Activated CD4-positive, alpha-beta T cell treated with anti-CD3 and anti-CD28 coated beads for 36 hours (primary cell): ENCODE measurements at regions of chr14 and their contacts with region 1.

Region 1: DNA sequence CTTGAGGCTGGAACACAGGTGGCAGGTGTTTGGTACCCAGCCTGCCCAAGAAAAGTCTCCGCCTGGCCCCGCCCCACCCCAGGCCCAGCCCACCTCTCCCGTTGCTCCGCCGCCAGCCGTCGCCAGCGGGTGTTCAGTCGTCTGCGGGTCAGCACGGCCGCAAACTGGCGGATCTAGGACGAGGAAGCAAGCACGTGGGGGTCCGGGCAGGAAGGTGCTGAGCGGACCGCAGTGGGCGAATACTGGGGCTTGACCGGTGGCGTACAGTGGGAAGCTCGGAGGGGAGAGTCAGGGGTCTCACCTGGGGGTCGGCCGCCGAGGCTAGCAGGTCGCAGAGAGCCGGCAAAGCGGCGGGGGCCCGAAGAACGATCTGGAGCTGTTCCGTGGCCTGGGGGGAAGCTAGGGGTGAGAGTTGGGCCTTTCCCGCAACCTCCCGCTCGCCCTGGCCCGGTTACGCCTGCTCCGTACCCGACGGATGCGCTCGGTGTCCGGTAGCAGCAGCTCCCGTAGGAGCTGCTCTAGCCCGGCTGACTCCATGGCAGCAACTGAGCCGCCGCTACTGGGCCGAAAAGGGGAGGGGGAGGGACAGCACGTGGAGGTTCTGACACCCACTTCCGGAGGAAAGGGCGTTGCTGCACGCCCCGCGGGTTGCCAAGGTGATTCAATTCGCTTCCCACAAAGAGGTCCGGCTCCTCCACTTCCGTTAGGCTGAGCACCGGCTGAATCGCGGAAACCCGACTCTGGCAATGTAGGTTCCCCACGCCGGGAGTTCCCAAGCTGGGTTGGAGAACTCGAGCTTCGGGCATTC is at the start of gene IPO4:
- DNase-seq: peak; percentile 97
- ATAC-seq: peak; percentile 92
- H3K4me3 Mint-ChIP-seq: peak within 1 kb of the TSS; percentile 89
- H3K27ac Mint-ChIP-seq: peak within 1 kb of the TSS; percentile 83
- H3K4me1 Mint-ChIP-seq: peaks cover 40% of the 10 kb centered on the region
- H3K27me3 Mint-ChIP-seq: no peaks in the 10 kb centered on the region
- total RNA-seq, gene IPO4: 73.4 to 73.7 TPM

Region 2: DNA sequence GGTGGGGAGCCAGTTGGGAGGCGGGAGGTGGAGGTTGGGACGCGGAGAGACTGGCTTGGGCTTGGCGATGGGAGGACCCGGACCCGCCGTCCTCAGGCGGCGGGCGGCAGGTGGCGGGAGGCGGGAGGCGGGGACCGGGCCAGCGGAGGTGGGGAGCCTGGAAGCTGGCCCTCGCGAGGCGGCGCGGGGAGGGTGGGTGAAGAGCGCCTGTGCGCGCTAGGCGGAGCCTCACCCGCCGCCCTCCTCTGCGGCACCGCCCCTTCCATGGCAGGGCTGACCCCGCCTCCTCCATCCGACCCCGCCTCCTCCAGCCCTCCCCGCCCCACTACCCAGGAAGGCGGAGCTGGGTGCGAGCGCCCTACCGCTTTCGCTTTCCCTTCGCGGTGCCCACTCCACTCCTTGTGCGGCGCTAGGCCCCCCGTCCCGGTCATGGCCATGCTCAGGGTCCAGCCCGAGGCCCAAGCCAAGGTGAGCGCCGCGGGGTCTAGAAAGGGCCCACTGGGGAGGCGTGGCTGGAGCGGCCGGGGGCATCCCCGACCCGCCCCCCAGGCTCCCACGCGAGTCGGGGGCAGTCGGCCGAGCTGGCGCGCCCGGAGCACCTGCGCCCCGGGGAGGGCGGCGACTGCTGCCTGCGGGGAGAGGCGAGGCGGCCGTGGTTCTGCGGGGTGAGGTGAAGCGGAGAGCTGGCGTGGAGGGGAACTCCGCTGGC is 52.5 kb before region 1 on chr14 and contains the start of gene PSME1:
- CTCF ChIA-PET with region 1: no interaction called
- POLR2A ChIA-PET with region 1: interaction called, 3 read pairs
- intact Hi-C with region 1: loop called (anchors 1 kb)
- DNase-seq: peak; percentile 98
- ATAC-seq: peak; percentile 95
- H3K4me3 Mint-ChIP-seq: peak within 1 kb of the TSS; percentile 92
- H3K27ac Mint-ChIP-seq: peak within 1 kb of the TSS; percentile 92
- H3K4me1 Mint-ChIP-seq: peaks cover 50% of the 10 kb centered on the region
- H3K27me3 Mint-ChIP-seq: no peaks in the 10 kb centered on the region
- total RNA-seq, gene PSME1: 414 to 418 TPM

Region 3: GRCh38 chr14:24141097-24141880 is 47.2 kb before region 1 on chr14 and contains the start of gene EMC9:
- CTCF ChIA-PET with region 1: interaction called, 3 read pairs
- POLR2A ChIA-PET with region 1: interaction called, 3 read pairs
- intact Hi-C with region 1: loop called (anchors 1 kb)
- DNase-seq: peak; percentile 100
- ATAC-seq: peak; percentile 87
- H3K4me3 Mint-ChIP-seq: peak within 1 kb of the TSS; percentile 88
- H3K27ac Mint-ChIP-seq: peak within 1 kb of the TSS; percentile 97
- H3K4me1 Mint-ChIP-seq: peaks cover 66% of the 10 kb centered on the region
- H3K27me3 Mint-ChIP-seq: no peaks in the 10 kb centered on the region
- total RNA-seq, gene EMC9: 36.9 to 46.7 TPM

Region 4: GRCh38 chr14:24171422-24172260 is 16.8 kb before region 1 on chr14 and contains the start of gene REC8:
- CTCF ChIA-PET with region 1: interaction called, 5 read pairs
- POLR2A ChIA-PET with region 1: no interaction called
- intact Hi-C with region 1: loop called (anchors 1 to 2 kb)
- DNase-seq: peak; percentile 75
- ATAC-seq: peak; percentile 81
- H3K4me3 Mint-ChIP-seq: peak within 1 kb of the TSS; percentile 66
- H3K27ac Mint-ChIP-seq: peak within 1 kb of the TSS; percentile 69
- H3K4me1 Mint-ChIP-seq: peaks cover 31% of the 10 kb centered on the region
- H3K27me3 Mint-ChIP-seq: no peaks in the 10 kb centered on the region
- total RNA-seq, gene REC8: 25.6 to 27.7 TPM

Region 5: GRCh38 chr14:24232121-24232644 is 43.7 kb after region 1 on chr14 and contains the start of gene NEDD8:
- CTCF ChIA-PET with region 1: interaction called, 3 read pairs
- POLR2A ChIA-PET with region 1: no interaction called
- intact Hi-C with region 1: loop called in 1 of 2 experiments (anchors 1 kb)
- DNase-seq: peak; percentile 96
- ATAC-seq: peak; percentile 91
- H3K4me3 Mint-ChIP-seq: peak within 1 kb of the TSS; percentile 78
- H3K27ac Mint-ChIP-seq: peak within 1 kb of the TSS; percentile 89
- H3K4me1 Mint-ChIP-seq: peaks cover 58% of the 10 kb centered on the region
- H3K27me3 Mint-ChIP-seq: no peaks in the 10 kb centered on the region
- total RNA-seq, gene NEDD8: 187 to 217 TPM